GM13976 (cell line): ENCODE measurements at regions of chr3 and their contacts with region 1.

Region 1: DNA sequence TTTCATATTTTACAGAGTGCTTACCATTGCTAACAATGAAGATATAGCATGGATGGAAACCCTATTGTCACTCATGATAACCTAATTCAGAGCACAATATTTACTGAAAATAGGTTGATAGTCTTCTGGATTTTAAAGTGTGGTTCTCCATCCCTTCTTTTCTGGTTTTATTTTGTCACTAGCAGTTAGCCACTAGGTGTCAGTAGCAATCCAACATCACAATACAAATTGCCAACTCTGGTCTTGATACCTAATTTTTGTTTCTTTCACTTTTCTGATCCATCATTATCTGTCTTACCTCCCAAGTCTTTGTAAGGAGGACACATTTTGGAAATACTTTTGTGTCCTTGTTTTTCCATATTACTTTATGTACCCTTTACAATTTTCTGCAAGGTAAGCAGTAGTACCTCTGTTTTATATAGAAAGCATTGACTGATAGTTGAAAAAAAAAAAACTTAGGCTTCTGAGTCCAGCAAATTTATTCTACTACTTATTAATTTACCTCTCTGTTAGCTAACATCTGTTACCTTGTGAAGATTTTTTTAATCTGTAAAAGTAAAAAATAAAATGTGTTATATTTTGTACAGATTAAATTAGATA is 28.3 kb upstream of the CRYBG3 start:
- DNase-seq: peak; percentile 23
- CTCF ChIP-seq: peak; percentile 64

Region 2: GRCh38 chr3:97848779-97849178 is 55.3 kb after region 1 on chr3:
- in situ Hi-C with region 1: no loop called
- DNase-seq: no peak
- CTCF ChIP-seq: no peak

Region 3: GRCh38 chr3:98022978-98023820 is 229.7 kb after region 1 on chr3:
- in situ Hi-C with region 1: loop called (anchors 5 kb)
- DNase-seq: peak; percentile 41
- CTCF ChIP-seq: peak; percentile 91